Psoas muscle (tissue), 8 donors: ENCODE measurements at regions of chr12 and their contacts with region 1.

Region 1: GRCh38 chr12:69655377-69656336 is 43.4 kb downstream of the BEST3 start:
- DNase-seq: no peak
- ATAC-seq: no peak
- H3K4me3 ChIP-seq: no peak overlapping the region
- H3K27ac ChIP-seq: peak overlapping the region; percentile 82
- H3K4me1 ChIP-seq: peaks cover 31% of the 10 kb centered on the region
- H3K27me3 ChIP-seq: no peaks in the 10 kb centered on the region
- CTCF ChIP-seq: no peak

Region 2: GRCh38 chr12:69698769-69699540 is 43.3 kb after region 1 on chr12 and contains the start of gene BEST3:
- intact Hi-C with region 1: loop called in 1 of 2 experiments (anchors 5 kb)
- DNase-seq: peak; percentile 34 to 75
- ATAC-seq: peak; percentile 91 to 92 (median 92)
- H3K4me3 ChIP-seq: peak within 1 kb of the TSS; percentile 66
- H3K27ac ChIP-seq: peak within 1 kb of the TSS; percentile 84
- H3K4me1 ChIP-seq: peaks cover 17% of the 10 kb centered on the region
- H3K27me3 ChIP-seq: no peaks in the 10 kb centered on the region
- CTCF ChIP-seq: no peak
- total RNA-seq, gene BEST3: 141 to 181 (median 170) TPM

Region 3: DNA sequence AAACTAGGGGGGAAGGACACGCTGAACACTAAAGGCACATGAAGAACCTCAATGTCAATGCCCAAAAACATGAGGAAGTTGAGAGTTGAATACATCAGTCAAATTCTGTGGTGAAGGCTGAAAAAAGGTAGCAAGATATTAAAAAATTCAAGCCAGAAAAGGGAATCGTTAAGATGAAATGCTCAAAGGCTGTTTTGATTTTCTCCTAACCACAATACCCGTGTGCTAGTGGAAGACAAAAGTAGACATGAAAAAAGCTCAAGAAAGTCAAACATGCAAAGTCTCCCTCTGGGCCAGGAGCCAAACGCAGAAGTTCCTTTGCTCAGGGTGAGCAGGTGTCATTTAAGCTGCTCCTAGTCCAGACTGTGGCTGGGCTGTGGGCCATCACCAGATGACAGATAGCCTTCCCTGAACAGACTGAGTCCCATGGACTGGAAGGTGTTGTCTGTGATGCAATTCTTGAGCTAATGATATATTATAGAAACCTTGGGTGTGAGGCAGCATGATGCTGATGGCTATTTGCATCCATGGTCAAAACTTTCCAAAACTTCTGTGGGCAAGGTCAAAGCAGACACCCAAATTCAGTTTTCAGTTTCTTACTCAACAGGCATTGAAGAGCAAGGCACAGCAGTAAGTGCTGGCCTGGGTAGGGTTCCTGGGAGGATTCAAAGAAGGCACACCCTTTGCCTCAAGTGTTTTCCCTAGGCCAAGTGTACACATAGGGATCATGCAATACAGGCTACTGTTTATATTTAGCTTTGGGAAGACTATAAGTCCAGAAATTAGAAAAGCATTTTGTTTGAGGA is 251.0 kb after region 1 on chr12:
- intact Hi-C with region 1: no loop called
- DNase-seq: no peak
- ATAC-seq: peak in 1 of 4 donors; percentile 58
- H3K4me3 ChIP-seq: no peak overlapping the region
- H3K27ac ChIP-seq: no peak overlapping the region
- H3K4me1 ChIP-seq: no peaks in the 10 kb centered on the region
- H3K27me3 ChIP-seq: no peaks in the 10 kb centered on the region
- CTCF ChIP-seq: no peak